H1 (cell line): ENCODE measurements at regions of chr17 and their contacts with region 1.

Region 1: DNA sequence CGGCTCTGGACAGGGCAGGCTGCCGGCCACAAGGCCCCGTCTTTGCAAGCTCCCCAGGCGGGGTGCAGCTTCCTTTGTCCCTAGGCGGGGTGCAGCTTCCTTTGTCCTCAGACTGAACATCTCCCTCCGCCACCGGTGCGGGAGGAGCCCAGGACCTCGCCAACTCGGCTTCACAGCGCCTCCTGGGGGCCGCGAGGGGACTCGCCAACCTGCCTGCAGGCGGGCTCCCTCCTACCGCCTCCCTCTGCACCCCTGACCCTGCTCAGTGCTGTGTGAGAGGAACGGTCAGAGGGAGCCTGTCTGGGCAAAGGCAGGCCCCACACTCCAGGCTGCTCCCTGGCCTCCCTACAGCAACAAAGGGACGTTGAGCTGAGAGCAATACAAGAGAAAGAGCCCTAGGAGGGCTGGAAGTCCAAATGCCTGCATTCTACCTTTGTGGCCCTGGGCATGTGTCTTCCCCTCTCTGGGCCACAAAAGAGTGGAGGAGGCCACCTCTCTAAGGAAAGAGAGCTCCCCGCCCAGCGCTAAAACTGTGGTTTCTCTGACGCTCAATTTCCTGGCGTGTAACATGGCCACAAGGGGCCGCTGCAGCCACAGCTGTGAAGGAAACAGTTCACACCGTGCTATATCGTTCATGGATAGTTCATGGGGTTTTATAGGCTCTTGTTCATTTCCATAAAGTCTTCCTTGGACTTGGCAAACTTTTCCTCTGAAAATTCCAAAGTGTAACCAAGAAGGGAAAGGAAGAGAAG is 20.9 kb upstream of the KRT19 start:
- DNase-seq: peak; percentile 80 to 95
- H3K4me3 ChIP-seq: peak overlapping the region in 3 of 4 experiments; percentile 13 to 43 (median 16); a peak in 4 of 8 replicates
- H3K27ac ChIP-seq: peak overlapping the region; percentile 64; the same call in 1 of the 2 replicates
- H3K4me1 ChIP-seq: peaks cover 8 to 24% (median 13%) of the 10 kb centered on the region in 4 experiments
- H3K27me3 ChIP-seq: no peaks in the 10 kb centered on the region; a peak in 2 of 7 replicates
- CTCF ChIP-seq: peak; percentile 87 to 97 (median 96)
- EP300 ChIP-seq: peak in 1 of 2 experiments; percentile 51; a peak in 1 of 3 replicates
- POLR2A ChIP-seq: peak in 1 of 2 experiments; percentile 63; a peak in 1 of 3 replicates
- RAD21 ChIP-seq: peak; percentile 91 to 96

Region 2: DNA sequence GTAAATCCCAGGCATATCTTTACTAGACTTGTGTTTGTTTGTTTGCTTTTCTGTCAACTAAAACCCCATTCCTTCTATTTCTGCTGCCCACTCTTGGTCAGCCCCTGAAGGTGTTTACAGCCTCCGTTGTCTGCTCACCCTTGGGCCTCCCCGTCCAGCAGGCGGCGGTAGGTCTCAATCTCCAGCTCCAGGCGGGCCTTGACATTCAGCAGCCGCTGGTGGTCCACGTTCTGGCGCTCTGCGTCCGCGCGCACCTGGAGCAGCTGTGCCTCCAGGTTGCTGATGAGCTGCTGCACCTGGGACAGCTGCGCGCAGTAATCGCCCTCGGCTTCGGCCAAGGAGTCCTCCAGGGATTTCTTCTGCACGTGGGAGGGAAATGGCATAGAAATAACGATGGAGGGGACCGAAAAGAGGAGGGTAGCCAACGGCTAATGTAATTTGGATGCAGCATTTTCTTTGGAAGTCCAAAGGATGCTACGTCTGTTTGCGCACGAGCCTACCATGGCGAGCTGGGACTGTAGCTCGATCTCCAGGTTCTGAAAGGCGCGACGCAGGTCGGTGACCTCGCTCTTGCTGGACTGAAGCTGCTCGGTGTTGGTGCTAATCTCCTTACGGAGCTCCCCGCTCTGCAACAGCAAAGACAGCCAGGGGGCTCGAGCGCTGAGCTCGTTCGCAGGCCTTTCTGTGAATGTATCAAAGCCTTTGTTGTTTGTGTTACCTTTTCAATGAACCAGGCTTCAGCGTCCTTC is 685.9 kb before region 1 on chr17:
- CTCF ChIA-PET with region 1: interaction called, 11 read pairs
- POLR2A ChIA-PET with region 1: no interaction called
- DNase-seq: peak; percentile 66 to 91
- H3K4me3 ChIP-seq: no peak overlapping the region
- H3K27ac ChIP-seq: no peak overlapping the region
- H3K4me1 ChIP-seq: no peaks in the 10 kb centered on the region; a peak in 1 of 7 replicates
- H3K27me3 ChIP-seq: peaks cover 0 to 4% (median 0%) of the 10 kb centered on the region in 4 experiments; a peak in 1 of 7 replicates
- CTCF ChIP-seq: peak; percentile 80 to 96 (median 95)
- EP300 ChIP-seq: no peak
- POLR2A ChIP-seq: no peak
- RAD21 ChIP-seq: peak; percentile 81 to 88

Region 3: GRCh38 chr17:41417576-41418015 is 131.4 kb before region 1 on chr17:
- CTCF ChIA-PET with region 1: interaction called, 13 read pairs
- POLR2A ChIA-PET with region 1: no interaction called
- DNase-seq: peak in 1 of 2 experiments; percentile 51
- H3K4me3 ChIP-seq: no peak overlapping the region
- H3K27ac ChIP-seq: no peak overlapping the region
- H3K4me1 ChIP-seq: peaks cover 0 to 7% (median 0%) of the 10 kb centered on the region in 4 experiments; a peak in 4 of 7 replicates
- H3K27me3 ChIP-seq: no peaks in the 10 kb centered on the region; a peak in 2 of 7 replicates
- CTCF ChIP-seq: peak; percentile 66 to 84 (median 71)
- EP300 ChIP-seq: no peak
- POLR2A ChIP-seq: no peak
- RAD21 ChIP-seq: peak; percentile 59 to 68

Region 4: GRCh38 chr17:41496820-41497408 is 52.1 kb before region 1 on chr17:
- CTCF ChIA-PET with region 1: interaction called, 427 read pairs
- POLR2A ChIA-PET with region 1: interaction called, 7 read pairs
- DNase-seq: peak; percentile 68 to 84
- H3K4me3 ChIP-seq: no peak overlapping the region
- H3K27ac ChIP-seq: no peak overlapping the region
- H3K4me1 ChIP-seq: peaks cover 0 to 19% (median 12%) of the 10 kb centered on the region in 4 experiments; a peak in 6 of 7 replicates
- H3K27me3 ChIP-seq: no peaks in the 10 kb centered on the region
- CTCF ChIP-seq: peak; percentile 82 to 94 (median 88)
- EP300 ChIP-seq: no peak
- POLR2A ChIP-seq: no peak
- RAD21 ChIP-seq: peak; percentile 80 to 92

Region 5: GRCh38 chr17:41559548-41559947 is 10.5 kb after region 1 on chr17:
- CTCF ChIA-PET with region 1: interaction called, 129 read pairs
- POLR2A ChIA-PET with region 1: interaction called, 6 read pairs
- DNase-seq: no peak
- H3K4me3 ChIP-seq: no peak overlapping the region
- H3K27ac ChIP-seq: no peak overlapping the region
- H3K4me1 ChIP-seq: peaks cover 0 to 2% (median 0%) of the 10 kb centered on the region in 4 experiments; a peak in 2 of 7 replicates
- H3K27me3 ChIP-seq: no peaks in the 10 kb centered on the region
- CTCF ChIP-seq: no peak
- EP300 ChIP-seq: no peak
- POLR2A ChIP-seq: no peak
- RAD21 ChIP-seq: no peak

Region 6: DNA sequence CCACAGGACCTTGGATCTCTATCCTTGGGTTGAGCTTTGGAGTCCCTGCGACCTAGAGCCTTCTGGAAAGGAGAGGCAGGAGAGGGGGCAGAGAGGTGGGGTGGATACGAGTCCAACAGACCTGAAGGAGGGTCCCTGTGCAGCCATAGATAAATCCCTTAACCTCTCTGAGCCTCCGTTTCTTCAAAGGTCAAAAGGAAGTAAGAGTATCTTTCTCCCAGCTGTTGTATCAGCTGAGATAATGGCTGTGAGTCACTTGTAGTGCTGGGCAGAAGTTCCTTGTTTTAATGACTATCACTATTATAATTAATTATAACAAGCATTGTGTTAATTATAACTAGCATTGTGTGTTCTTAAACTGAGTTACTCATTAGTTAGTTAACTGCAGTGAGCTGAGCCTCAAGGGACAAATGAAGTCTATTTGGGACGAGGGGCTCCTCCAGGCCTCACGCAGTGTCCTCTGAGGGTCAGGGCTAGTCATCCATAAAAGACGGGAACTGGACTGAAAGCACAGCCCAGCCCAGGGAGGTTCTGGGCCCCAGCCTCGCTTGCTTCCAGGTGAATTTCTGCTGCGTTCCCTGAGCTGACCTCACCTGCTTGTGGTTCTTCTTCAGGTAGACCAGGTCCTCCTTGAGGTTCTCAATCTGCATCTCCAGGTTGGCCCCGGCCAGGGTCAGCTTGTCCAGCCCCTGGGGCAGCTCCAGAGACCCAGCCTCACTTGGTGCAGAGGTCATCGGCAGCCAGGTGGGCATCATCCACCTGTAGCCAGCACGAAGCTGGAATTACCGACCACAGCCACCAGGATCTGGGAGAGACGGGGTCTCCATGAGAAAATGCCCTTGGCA is 81.0 kb after region 1 on chr17:
- CTCF ChIA-PET with region 1: interaction called, 17 read pairs
- POLR2A ChIA-PET with region 1: no interaction called
- DNase-seq: no peak
- H3K4me3 ChIP-seq: no peak overlapping the region
- H3K27ac ChIP-seq: no peak overlapping the region
- H3K4me1 ChIP-seq: peaks cover 0 to 4% (median 0%) of the 10 kb centered on the region in 4 experiments; a peak in 1 of 7 replicates
- H3K27me3 ChIP-seq: peaks cover 0 to under 1% (median 0%) of the 10 kb centered on the region in 4 experiments; a peak in 1 of 7 replicates
- CTCF ChIP-seq: no peak
- EP300 ChIP-seq: no peak
- POLR2A ChIP-seq: no peak
- RAD21 ChIP-seq: no peak